Posterior vena cava (tissue), 2 donors: ENCODE measurements at regions of chr4 and their contacts with region 1.

Region 1: DNA sequence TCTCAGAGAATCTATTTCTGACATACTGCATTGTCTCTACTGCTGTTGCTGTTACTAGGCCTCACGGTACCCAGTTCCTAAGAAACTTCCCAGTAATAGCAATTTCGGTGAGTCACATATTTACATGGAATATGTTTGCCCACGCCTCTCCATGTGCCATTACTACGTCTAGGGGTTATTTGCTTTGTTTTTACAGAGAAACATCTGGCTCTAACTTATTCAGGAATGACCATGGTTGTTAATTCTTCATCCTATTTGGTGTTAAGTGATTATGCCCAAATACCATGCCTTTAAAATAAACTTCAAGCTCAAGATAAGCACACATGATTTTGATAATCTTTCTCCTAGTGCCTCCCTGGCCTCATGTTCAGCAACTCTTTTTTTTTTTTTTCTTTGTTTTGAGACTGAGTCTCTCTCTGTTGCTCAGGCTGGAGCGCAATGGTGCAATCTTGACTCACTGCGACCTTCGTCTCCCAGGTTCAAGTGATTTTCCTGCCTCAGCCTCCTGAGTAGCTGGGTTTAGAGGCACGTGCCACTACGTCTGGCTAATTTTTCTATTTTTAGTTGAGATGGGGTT is 101.0 kb upstream of the HS3ST1 start:
- DNase-seq: no peak

Region 2: GRCh38 chr4:12644261-12644660 is 1114.5 kb after region 1 on chr4:
- intact Hi-C with region 1: loop called in 1 of 2 experiments (anchors 10 kb)
- DNase-seq: no peak